ENCODE measurements at regions of chr6 and their contacts with region 1.

Region 1: GRCh38 chr6:14066782-14067406 is 50.7 kb upstream of the CD83 start:
- DNase-seq: no peak
- ATAC-seq: peak; percentile 87
- H3K4me3 ChIP-seq: no peak overlapping the region
- H3K27ac ChIP-seq: no peak overlapping the region
- H3K4me1 ChIP-seq: peaks cover 7% of the 10 kb centered on the region
- H3K27me3 ChIP-seq: peaks cover 0 to 6% of the 10 kb centered on the region in 2 experiments; a peak in 2 of 4 replicates
- CTCF ChIP-seq: peak; percentile 48 to 76 (median 58); a peak in 5 of 6 replicates
- EP300 ChIP-seq: no peak
- POLR2A ChIP-seq: no peak
- RAD21 ChIP-seq: peak; percentile 86

Region 2: GRCh38 chr6:13908955-13909381 is 157.9 kb before region 1 on chr6:
- CTCF ChIA-PET with region 1: interaction called, 194 read pairs
- POLR2A ChIA-PET with region 1: interaction called, 4 read pairs
- RAD21 ChIA-PET with region 1: interaction called, 67 read pairs
- SMC1A ChIA-PET with region 1: interaction called, 87 read pairs
- in situ Hi-C with region 1: loop called (anchors 5 kb)
- intact Hi-C with region 1: loop called (anchors 1 kb)
- DNase-seq: peak; percentile 27
- ATAC-seq: peak; percentile 91
- H3K4me3 ChIP-seq: no peak overlapping the region
- H3K27ac ChIP-seq: no peak overlapping the region
- H3K4me1 ChIP-seq: no peaks in the 10 kb centered on the region
- H3K27me3 ChIP-seq: no peaks in the 10 kb centered on the region
- CTCF ChIP-seq: peak; percentile 72 to 88 (median 72)
- EP300 ChIP-seq: no peak
- POLR2A ChIP-seq: no peak
- RAD21 ChIP-seq: peak; percentile 93

Region 3: GRCh38 chr6:14046476-14047068 is 20.3 kb before region 1 on chr6:
- CTCF ChIA-PET with region 1: interaction called, 157 read pairs
- POLR2A ChIA-PET with region 1: no interaction called
- RAD21 ChIA-PET with region 1: interaction called, 24 read pairs
- SMC1A ChIA-PET with region 1: interaction called, 43 read pairs
- in situ Hi-C with region 1: no loop called
- intact Hi-C with region 1: no loop called
- DNase-seq: no peak
- ATAC-seq: peak; percentile 94
- H3K4me3 ChIP-seq: no peak overlapping the region
- H3K27ac ChIP-seq: no peak overlapping the region
- H3K4me1 ChIP-seq: no peaks in the 10 kb centered on the region
- H3K27me3 ChIP-seq: peaks cover 2 to 3% of the 10 kb centered on the region in 2 experiments; a peak in 2 of 4 replicates
- CTCF ChIP-seq: peak; percentile 63 to 79 (median 75)
- EP300 ChIP-seq: no peak
- POLR2A ChIP-seq: no peak
- RAD21 ChIP-seq: peak; percentile 64

Region 4: DNA sequence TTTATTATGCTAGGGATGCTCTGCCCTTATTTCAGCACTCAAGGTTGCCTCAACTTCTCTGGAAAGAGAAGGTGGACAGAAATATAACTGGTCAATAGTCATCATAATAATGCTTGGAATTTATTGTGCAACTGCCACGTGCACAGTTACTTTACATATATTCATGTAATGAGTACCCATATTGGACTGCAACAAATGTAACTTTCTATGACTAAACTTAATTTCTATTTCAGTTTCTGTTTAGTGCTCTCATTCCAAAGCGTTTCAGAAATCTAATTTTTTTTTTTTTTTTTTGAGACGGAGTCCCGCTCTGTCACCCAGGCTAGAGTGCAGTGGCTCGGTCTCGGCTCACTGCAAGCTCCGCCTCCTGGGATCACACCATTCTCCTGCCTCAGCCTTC is 22.3 kb after region 1 on chr6:
- CTCF ChIA-PET with region 1: interaction called, 18 read pairs
- POLR2A ChIA-PET with region 1: interaction called, 3 read pairs
- RAD21 ChIA-PET with region 1: interaction called, 13 read pairs
- SMC1A ChIA-PET with region 1: interaction called, 226 read pairs
- in situ Hi-C with region 1: no loop called
- intact Hi-C with region 1: no loop called
- DNase-seq: no peak
- ATAC-seq: peak; percentile 53
- H3K4me3 ChIP-seq: peak overlapping the region; percentile 4; the same call in 1 of the 2 replicates
- H3K27ac ChIP-seq: no peak overlapping the region
- H3K4me1 ChIP-seq: peaks cover 66% of the 10 kb centered on the region
- H3K27me3 ChIP-seq: no peaks in the 10 kb centered on the region
- CTCF ChIP-seq: no peak
- EP300 ChIP-seq: 0 out of 4 replicates have a peak, but pooled peaks of 1 of the 2 experiments have one; percentile 18
- POLR2A ChIP-seq: no peak
- RAD21 ChIP-seq: no peak

Region 5: DNA sequence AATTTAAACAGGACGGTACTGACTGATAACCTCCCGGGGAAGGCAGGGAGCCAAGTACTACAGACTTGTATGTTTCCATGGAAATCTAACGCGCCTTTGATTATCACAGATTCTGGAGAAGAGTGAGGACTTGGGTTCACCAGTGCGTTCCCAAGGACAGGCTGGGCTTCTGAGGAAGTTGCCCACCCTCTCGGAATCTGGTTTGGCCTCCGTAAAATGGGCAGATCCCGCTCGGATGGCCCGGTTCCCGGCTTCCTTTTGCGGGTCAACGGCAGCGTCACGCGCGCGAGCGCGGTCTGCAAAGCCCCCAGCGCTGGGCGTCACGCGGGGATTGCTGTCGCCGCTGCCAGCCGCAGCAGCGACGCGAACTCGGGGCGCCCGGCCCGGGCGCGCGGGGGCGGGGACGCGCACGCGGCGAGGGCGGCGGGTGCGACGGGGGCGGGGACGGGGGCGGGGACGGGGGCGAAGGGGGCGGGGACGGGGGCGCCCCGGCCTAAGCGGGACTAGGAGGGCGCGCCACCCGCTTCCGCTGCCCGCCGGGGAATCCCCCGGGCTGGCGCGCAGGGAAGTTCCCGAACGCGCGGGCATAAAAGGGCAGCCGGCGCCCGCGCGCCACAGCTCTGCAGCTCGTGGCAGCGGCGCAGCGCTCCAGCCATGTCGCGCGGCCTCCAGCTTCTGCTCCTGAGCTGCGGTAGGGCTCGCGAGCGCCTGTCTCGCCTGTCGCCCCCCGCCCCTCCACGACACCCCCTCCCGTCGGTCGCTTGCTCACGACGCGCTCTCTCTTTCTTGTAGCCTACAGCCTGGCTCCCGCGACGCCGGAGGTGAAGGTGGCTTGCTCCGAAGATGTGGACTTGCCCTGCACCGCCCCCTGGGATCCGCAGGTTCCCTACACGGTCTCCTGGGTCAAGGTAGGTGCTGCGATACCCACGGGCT is 50.5 kb after region 1 on chr6 and contains the start of gene CD83:
- CTCF ChIA-PET with region 1: interaction called, 39 read pairs
- POLR2A ChIA-PET with region 1: interaction called, 3 read pairs
- RAD21 ChIA-PET with region 1: interaction called, 18 read pairs
- SMC1A ChIA-PET with region 1: interaction called, 66 read pairs
- in situ Hi-C with region 1: no loop called
- intact Hi-C with region 1: no loop called
- DNase-seq: no peak
- ATAC-seq: peak; percentile 68
- H3K4me3 ChIP-seq: peak within 1 kb of the TSS; percentile 93
- H3K27ac ChIP-seq: peak within 1 kb of the TSS; percentile 78
- H3K4me1 ChIP-seq: peaks cover 14% of the 10 kb centered on the region
- H3K27me3 ChIP-seq: no peaks in the 10 kb centered on the region
- CTCF ChIP-seq: peak in 2 of 3 experiments; percentile 11 to 34; a peak in 2 of 6 replicates
- EP300 ChIP-seq: peak in 1 of 2 experiments; percentile 42; a peak in 1 of 4 replicates
- POLR2A ChIP-seq: peak; percentile 100
- RAD21 ChIP-seq: peak; percentile 35
- polyA plus RNA-seq, gene CD83: 120 to 174 TPM

Region 6: GRCh38 chr6:14138701-14139215 is 71.9 kb after region 1 on chr6:
- CTCF ChIA-PET with region 1: interaction called, 90 read pairs
- POLR2A ChIA-PET with region 1: no interaction called
- RAD21 ChIA-PET with region 1: interaction called, 35 read pairs
- SMC1A ChIA-PET with region 1: interaction called, 64 read pairs
- in situ Hi-C with region 1: no loop called
- intact Hi-C with region 1: no loop called
- DNase-seq: no peak
- ATAC-seq: no peak
- H3K4me3 ChIP-seq: no peak overlapping the region
- H3K27ac ChIP-seq: no peak overlapping the region
- H3K4me1 ChIP-seq: peaks cover 6% of the 10 kb centered on the region; the same call in 1 of the 2 replicates
- H3K27me3 ChIP-seq: no peaks in the 10 kb centered on the region
- CTCF ChIP-seq: no peak
- EP300 ChIP-seq: no peak
- POLR2A ChIP-seq: no peak
- RAD21 ChIP-seq: no peak

Measured in GM12878 (cell line).